Dorsolateral prefrontal cortex (tissue), 120 donors: ENCODE measurements at regions of chr12 and their contacts with region 1.

Region 1: GRCh38 chr12:114131824-114132223 is 165.7 kb upstream of the RBM19 start:
- DNase-seq: no peak
- H3K4me3 ChIP-seq: no peak overlapping the region
- H3K27ac ChIP-seq: no peak overlapping the region
- H3K27me3 ChIP-seq: peaks cover 0 to 37% (median 6%) of the 10 kb centered on the region in 45 donors
- CTCF ChIP-seq: no peak

Region 2: GRCh38 chr12:113515082-113515856 is 616.6 kb before region 1 on chr12:
- intact Hi-C with region 1: no loop called
- DNase-seq: no peak
- H3K4me3 ChIP-seq: no peak overlapping the region
- H3K27ac ChIP-seq: no peak overlapping the region
- H3K27me3 ChIP-seq: peaks cover 0 to 97% (median 82%) of the 10 kb centered on the region in 45 donors
- CTCF ChIP-seq: no peak

Region 3: GRCh38 chr12:114174326-114174725 is 42.5 kb after region 1 on chr12:
- intact Hi-C with region 1: loop called in 1 of 2 experiments (anchors 1 kb)
- DNase-seq: no peak
- H3K4me3 ChIP-seq: no peak overlapping the region
- H3K27ac ChIP-seq: no peak overlapping the region
- H3K27me3 ChIP-seq: peaks cover 0 to 21% (median 0%) of the 10 kb centered on the region in 45 donors
- CTCF ChIP-seq: no peak